ENCODE measurements at regions of chr2 and their contacts with region 1.

Region 1: DNA sequence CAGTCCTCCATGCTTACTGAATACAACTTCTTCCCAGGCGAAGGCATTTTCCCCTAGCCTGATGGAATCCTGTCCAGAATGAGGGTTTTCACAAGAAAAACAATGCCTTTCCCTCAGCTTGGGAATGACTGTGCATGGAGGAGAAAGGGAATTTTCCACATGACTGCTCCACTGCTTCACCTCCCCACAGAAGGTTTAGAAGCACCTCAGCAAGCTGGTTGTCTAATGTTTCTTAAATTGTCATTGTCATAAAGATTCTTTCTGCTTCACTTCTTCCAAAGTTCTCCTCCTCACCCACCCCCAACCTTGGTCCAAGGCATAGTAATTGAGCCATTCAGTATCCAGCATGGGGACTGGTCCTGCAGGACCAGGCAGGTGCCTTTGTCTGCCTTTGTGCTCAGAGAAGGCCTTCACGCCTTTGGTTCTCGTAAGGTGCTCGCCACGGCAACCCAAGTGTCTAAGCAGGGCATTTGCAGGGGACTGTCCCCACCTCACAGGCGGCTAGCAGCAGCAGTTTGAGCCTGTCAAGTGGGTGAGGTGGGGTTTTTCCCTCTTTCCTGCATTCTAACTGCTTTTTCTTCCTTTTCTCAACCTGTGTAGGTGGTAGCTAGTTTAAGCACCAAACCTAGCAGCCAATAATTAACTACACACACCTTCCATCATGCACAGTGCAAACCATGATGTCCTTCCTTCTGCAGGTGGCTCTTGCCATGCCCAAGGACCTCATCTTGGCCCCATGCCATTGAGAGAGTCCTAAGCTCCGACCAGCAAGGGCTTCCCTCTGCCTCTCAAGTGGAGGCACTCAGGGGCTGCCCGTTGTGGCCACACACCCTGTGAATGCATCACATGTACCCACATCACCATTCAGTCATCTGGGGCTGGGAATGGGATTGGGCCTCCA is 65.7 kb upstream of the BCL2L11 start:
- DNase-seq: peak; percentile 82
- ATAC-seq: peak; percentile 94
- H3K4me3 Mint-ChIP-seq: no peak overlapping the region
- H3K27ac Mint-ChIP-seq: no peak overlapping the region
- H3K4me1 Mint-ChIP-seq: peaks cover 37% of the 10 kb centered on the region
- H3K27me3 Mint-ChIP-seq: peaks cover 41% of the 10 kb centered on the region

Region 2: DNA sequence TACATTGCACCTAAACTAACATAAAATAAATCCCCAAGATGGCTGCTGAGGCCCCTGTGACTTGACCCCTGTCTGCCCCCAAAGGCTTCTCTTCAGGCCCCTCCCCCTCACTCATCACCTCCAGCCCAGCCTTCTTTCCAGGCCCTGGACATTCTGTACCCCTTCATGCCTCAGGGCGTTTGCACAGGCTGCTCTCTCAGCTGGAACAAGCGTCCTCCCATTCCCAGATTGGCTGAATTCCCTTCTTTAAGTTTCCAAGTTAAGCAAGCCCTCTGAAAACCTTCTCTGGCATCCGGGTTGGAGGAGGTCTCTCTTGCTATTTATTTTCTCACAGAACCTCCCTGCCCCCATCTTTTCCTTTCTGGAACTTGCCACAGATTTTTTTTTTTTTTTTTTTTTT is 99.5 kb before region 1 on chr2:
- CTCF ChIA-PET with region 1: no interaction called
- POLR2A ChIA-PET with region 1: no interaction called
- intact Hi-C with region 1: no loop called
- DNase-seq: no peak
- ATAC-seq: no peak
- H3K4me3 Mint-ChIP-seq: no peak overlapping the region
- H3K27ac Mint-ChIP-seq: no peak overlapping the region
- H3K4me1 Mint-ChIP-seq: no peaks in the 10 kb centered on the region
- H3K27me3 Mint-ChIP-seq: peaks cover 7% of the 10 kb centered on the region

Region 3: GRCh38 chr2:111042772-111043771 is 12.0 kb before region 1 on chr2:
- CTCF ChIA-PET with region 1: interaction called, 3 read pairs
- POLR2A ChIA-PET with region 1: no interaction called
- intact Hi-C with region 1: loop called in 1 of 2 experiments (anchors 1 kb)
- DNase-seq: peak; percentile 57
- ATAC-seq: peak; percentile 91
- H3K4me3 Mint-ChIP-seq: peak overlapping the region; percentile 5
- H3K27ac Mint-ChIP-seq: no peak overlapping the region
- H3K4me1 Mint-ChIP-seq: peaks cover 26% of the 10 kb centered on the region
- H3K27me3 Mint-ChIP-seq: peaks cover 53% of the 10 kb centered on the region

Region 4: DNA sequence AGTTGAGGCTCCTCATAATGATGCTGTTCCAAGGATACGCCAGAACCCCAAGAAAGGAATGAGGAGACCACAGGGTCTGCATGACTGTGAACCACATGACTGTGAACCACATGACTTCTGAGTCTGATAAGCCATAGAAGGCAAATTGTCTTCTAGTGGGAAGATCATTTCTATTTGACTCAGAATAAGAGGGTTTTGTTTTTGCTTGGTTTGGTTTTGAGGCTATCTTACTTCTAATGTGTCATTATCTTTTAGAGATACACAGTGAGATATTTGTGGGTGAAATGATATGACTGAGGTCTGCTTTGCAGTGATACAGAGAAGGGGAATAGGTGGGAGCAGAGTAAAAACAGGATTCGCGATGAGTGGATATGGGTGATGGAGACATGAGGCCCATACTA is 36.8 kb after region 1 on chr2:
- CTCF ChIA-PET with region 1: no interaction called
- POLR2A ChIA-PET with region 1: no interaction called
- intact Hi-C with region 1: loop called (anchors 2 kb)
- DNase-seq: peak; percentile 42
- ATAC-seq: peak; percentile 98
- H3K4me3 Mint-ChIP-seq: no peak overlapping the region
- H3K27ac Mint-ChIP-seq: no peak overlapping the region
- H3K4me1 Mint-ChIP-seq: peaks cover 16% of the 10 kb centered on the region
- H3K27me3 Mint-ChIP-seq: peaks cover 50% of the 10 kb centered on the region

Region 5: DNA sequence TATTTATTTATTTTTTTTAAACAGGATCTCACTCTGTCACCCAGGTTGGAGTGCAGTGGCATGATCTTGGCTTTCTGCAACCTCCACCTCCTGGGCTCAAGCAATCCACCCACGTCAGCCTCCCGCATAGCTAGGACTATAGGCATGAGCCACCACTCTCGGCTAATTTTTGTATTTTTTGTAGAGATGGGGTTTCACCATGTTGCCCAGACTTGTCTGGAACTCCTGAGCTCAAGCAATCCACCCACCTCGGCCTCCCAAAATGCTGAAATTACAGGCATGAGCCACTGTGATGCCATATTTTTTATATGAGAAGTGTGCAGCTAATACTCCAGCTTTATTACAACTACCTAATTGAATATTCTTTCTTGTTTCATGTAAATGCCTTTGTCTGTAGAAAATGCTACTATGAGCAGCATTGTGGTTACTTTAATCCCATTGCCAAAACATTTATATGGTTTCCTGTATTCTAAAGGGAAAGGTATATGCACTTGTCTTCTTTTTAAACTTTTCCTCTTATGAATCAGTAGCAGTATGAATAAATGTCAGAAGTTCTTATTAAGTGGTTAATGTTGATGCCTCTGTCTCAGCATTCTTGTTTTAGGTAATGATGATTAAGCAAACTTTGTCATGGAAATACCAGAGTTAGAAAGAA is 56.2 kb after region 1 on chr2:
- CTCF ChIA-PET with region 1: no interaction called
- POLR2A ChIA-PET with region 1: no interaction called
- intact Hi-C with region 1: loop called in 1 of 2 experiments (anchors 5 kb)
- DNase-seq: peak; percentile 34
- ATAC-seq: peak; percentile 25
- H3K4me3 Mint-ChIP-seq: no peak overlapping the region
- H3K27ac Mint-ChIP-seq: no peak overlapping the region
- H3K4me1 Mint-ChIP-seq: peaks cover 19% of the 10 kb centered on the region
- H3K27me3 Mint-ChIP-seq: peaks cover 51% of the 10 kb centered on the region

Region 6: DNA sequence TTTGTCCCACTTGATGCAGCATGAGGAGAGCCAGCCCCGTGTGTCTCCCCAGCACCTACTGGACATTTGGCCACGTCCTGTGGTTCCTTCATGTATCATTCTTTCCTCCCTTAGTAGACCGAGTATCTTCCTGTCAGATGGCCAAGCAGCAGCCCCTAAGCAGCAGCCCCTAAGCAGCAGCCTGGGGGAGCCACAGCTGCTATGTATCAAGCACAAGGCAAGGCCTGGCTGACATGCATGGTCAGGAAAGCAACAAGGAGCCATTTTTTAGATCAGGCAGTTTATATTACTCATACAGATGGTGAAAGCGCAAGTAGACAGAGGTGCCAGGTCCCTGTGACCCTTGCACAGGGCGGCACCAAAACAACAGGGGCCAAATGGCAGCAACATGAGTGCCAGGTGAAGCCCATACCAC is 1551.5 kb after region 1 on chr2:
- CTCF ChIA-PET with region 1: no interaction called
- POLR2A ChIA-PET with region 1: no interaction called
- intact Hi-C with region 1: no loop called
- DNase-seq: no peak
- ATAC-seq: no peak
- H3K4me3 Mint-ChIP-seq: no peak overlapping the region
- H3K27ac Mint-ChIP-seq: no peak overlapping the region
- H3K4me1 Mint-ChIP-seq: no peaks in the 10 kb centered on the region
- H3K27me3 Mint-ChIP-seq: no peaks in the 10 kb centered on the region

Measured in activated CD4-positive, alpha-beta T cell treated with anti-CD3 and anti-CD28 coated beads for 36 hours (primary cell).